ENCODE measurements at regions of chr3 and their contacts with region 1.

Region 1: DNA sequence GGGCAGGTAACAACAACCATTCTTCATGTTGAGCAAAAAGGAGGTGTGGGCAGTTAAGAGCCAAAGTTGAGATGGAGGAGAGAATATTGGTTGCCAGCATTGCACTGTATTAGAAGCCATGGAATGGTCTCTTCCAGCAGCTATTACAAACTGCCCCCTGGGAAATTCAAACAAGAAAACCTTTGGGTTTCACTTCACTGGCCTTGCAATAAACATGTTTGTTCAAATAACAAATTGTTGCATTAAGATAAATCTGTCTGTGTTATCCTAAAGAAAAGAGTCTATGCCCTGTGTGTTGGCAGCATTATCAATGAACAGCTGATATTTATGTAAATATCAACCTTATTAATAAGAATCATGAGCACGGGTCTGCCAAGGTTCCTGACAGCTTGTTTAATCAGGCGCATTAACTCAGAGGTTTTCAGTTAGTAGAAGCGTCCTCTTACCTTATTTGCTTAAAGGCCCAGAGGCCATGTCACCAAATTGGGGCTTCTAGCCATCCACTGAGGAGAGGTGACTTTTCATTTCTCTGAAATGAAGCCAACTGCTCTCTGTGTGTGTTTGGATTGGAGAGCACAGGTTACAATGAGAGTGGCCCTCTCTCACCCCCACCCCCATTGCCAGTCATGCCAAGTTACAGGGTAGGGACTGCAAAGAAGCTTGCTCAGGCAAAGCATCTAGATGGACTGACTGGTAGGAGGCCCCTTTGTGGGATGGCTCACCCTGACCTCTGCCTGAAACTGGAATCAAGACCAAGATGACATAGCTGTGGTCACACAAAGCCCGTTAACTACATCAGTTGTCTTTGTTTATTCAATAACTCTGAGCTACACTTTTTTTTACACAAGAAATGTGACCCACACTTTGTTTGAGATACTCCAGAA is 10.5 kb downstream of the FILIP1L start:
- DNase-seq: peak; percentile 78
- ATAC-seq: peak; percentile 39
- H3K4me3 ChIP-seq: no peak overlapping the region
- H3K27ac ChIP-seq: peak overlapping the region; percentile 88
- H3K4me1 ChIP-seq: peaks cover 69% of the 10 kb centered on the region
- H3K27me3 ChIP-seq: no peaks in the 10 kb centered on the region
- CTCF ChIP-seq: no peak

Region 2: DNA sequence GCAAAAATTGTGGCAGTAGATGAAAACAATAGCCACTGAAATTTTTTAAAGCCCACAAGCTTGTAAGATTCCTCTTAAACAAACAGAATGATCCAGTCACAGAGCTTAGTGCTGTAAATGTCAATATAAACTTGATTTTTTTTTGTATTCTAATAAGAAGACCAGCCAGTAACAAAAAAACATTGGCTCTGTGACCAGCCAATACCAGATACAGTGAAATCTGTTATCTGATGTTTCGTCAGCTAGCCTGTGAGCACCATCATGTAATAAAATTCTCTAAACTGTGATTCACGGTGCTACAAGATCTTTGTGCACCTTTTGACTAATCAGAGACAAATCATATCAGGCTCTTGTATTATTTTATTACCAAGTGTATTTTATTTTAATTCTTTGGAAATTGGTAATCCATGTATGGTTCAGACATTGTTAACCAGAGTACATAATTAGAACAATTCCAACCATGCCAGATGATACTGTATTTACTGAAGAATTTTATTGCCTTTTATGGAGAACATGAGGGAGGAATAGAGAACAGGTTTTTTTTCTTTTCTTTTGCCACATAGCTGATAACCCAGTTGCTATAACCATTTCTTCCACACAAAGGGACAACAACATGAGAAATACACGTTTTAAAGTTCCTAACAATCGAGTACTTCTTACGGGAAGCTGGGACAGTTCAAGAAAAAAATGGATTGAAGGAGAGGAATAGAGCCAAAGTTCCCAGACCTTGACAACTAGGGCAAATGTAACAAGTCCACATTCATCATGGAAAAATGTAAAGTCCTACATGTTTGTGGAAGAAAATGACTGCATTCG is 61.4 kb before region 1 on chr3:
- CTCF ChIA-PET with region 1: interaction called, 3 read pairs
- POLR2A ChIA-PET with region 1: no interaction called
- intact Hi-C with region 1: loop called (anchors 1 kb)
- DNase-seq: peak; percentile 97
- ATAC-seq: peak; percentile 71
- H3K4me3 ChIP-seq: peak overlapping the region; percentile 41
- H3K27ac ChIP-seq: peak overlapping the region; percentile 86
- H3K4me1 ChIP-seq: peaks cover 57% of the 10 kb centered on the region
- H3K27me3 ChIP-seq: no peaks in the 10 kb centered on the region
- CTCF ChIP-seq: no peak

Region 3: DNA sequence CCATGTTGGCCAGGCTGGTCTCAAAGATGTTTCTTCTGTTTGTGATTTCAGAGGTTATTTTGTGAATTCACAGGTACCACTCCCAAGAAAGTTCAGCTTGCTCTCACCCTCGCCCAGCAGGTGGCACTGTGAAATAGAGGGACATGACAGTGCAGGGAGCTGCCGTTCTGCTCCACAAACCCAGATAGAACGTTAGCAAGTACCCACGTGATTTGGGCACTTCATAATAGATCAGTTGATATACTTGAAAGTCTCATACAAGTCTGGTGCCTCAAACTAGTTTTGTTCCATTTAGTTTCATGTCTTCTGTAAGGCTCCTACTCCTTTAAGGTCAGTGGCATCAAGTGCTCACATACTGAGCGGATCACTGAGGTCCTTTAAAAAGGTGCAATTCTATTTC is 35.0 kb before region 1 on chr3:
- CTCF ChIA-PET with region 1: no interaction called
- POLR2A ChIA-PET with region 1: no interaction called
- intact Hi-C with region 1: loop called (anchors 1 kb)
- DNase-seq: peak; percentile 90
- ATAC-seq: peak; percentile 79
- H3K4me3 ChIP-seq: no peak overlapping the region
- H3K27ac ChIP-seq: no peak overlapping the region
- H3K4me1 ChIP-seq: peaks cover 43% of the 10 kb centered on the region
- H3K27me3 ChIP-seq: no peaks in the 10 kb centered on the region
- CTCF ChIP-seq: peak; percentile 94

Region 4: GRCh38 chr3:100089812-100090668 is 13.8 kb before region 1 on chr3:
- CTCF ChIA-PET with region 1: no interaction called
- POLR2A ChIA-PET with region 1: interaction called, 3 read pairs
- intact Hi-C with region 1: loop called (anchors 1 kb)
- DNase-seq: peak; percentile 67
- ATAC-seq: peak; percentile 26; the same call in 1 of the 2 replicates
- H3K4me3 ChIP-seq: no peak overlapping the region
- H3K27ac ChIP-seq: no peak overlapping the region
- H3K4me1 ChIP-seq: peaks cover 62% of the 10 kb centered on the region
- H3K27me3 ChIP-seq: no peaks in the 10 kb centered on the region
- CTCF ChIP-seq: peak; percentile 69

Region 5: DNA sequence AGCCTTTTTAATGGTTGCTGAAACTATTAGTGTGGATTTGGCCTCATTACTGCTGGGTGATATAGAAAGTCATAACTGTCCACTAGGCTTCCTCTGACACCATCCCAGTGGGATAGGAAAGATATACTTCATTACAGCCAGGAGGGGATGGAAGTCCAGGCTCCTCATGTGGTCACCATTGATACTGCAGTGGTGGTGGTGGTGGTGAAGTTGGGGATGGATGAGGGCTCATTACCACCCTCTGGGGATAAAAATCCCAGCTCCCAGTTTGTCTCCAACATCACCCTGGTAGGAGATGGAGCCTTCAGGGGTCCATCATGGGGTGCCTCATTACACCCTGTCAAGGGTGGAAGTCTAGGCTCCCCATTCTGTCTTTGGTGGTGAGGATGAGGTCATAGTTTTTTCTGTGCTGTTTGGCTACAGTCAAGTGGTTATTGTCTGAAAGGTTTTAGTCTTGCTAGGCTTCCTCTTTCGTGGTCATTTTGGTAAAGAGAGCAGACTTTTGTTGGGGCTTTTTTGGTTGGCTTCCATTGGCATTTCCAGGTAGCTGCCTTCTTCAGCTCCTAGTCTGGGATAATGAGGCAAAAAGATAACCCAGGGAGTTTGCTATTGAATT is 40.6 kb after region 1 on chr3:
- CTCF ChIA-PET with region 1: no interaction called
- POLR2A ChIA-PET with region 1: no interaction called
- intact Hi-C with region 1: no loop called
- DNase-seq: no peak
- ATAC-seq: no peak
- H3K4me3 ChIP-seq: no peak overlapping the region
- H3K27ac ChIP-seq: no peak overlapping the region
- H3K4me1 ChIP-seq: no peaks in the 10 kb centered on the region
- H3K27me3 ChIP-seq: no peaks in the 10 kb centered on the region
- CTCF ChIP-seq: no peak

Region 6: GRCh38 chr3:100159331-100160153 is 55.7 kb after region 1 on chr3:
- CTCF ChIA-PET with region 1: no interaction called
- POLR2A ChIA-PET with region 1: no interaction called
- intact Hi-C with region 1: loop called (anchors 2 kb)
- DNase-seq: peak; percentile 87
- ATAC-seq: peak; percentile 77
- H3K4me3 ChIP-seq: peak overlapping the region; percentile 22; the same call in 1 of the 2 replicates
- H3K27ac ChIP-seq: peak overlapping the region; percentile 65
- H3K4me1 ChIP-seq: peaks cover 33% of the 10 kb centered on the region
- H3K27me3 ChIP-seq: no peaks in the 10 kb centered on the region
- CTCF ChIP-seq: no peak

Region 7: GRCh38 chr3:100254168-100254777 is 150.5 kb after region 1 on chr3:
- CTCF ChIA-PET with region 1: interaction called, 3 read pairs
- POLR2A ChIA-PET with region 1: interaction called, 5 read pairs
- intact Hi-C with region 1: loop called (anchors 1 kb)
- DNase-seq: peak; percentile 82
- ATAC-seq: peak; percentile 94
- H3K4me3 ChIP-seq: no peak overlapping the region
- H3K27ac ChIP-seq: no peak overlapping the region
- H3K4me1 ChIP-seq: peaks cover 20% of the 10 kb centered on the region
- H3K27me3 ChIP-seq: no peaks in the 10 kb centered on the region
- CTCF ChIP-seq: peak; percentile 97